HepG2 (cell line): ENCODE measurements at regions of chr19 and their contacts with region 1.

Region 1: GRCh38 chr19:47243776-47244547 is 12.4 kb upstream of the CCDC9 start:
- DNase-seq: peak; percentile 92
- ATAC-seq: peak; percentile 92
- H3K4me3 ChIP-seq: peak overlapping the region in 2 of 3 experiments; percentile 45 to 46; a peak in 4 of 6 replicates
- H3K27ac ChIP-seq: peak overlapping the region; percentile 46
- H3K4me1 ChIP-seq: peaks cover 54% of the 10 kb centered on the region
- H3K27me3 ChIP-seq: no peaks in the 10 kb centered on the region
- CTCF ChIP-seq: peak; percentile 98
- EP300 ChIP-seq: peak; percentile 51 to 84; a peak in 3 of 4 replicates
- POLR2A ChIP-seq: no peak
- RAD21 ChIP-seq: peak; percentile 99

Region 2: GRCh38 chr19:47120470-47121067 is 123.4 kb before region 1 on chr19:
- CTCF ChIA-PET with region 1: no interaction called
- POLR2A ChIA-PET with region 1: no interaction called
- in situ Hi-C with region 1: no loop called
- intact Hi-C with region 1: no loop called
- DNase-seq: no peak
- ATAC-seq: no peak; the same call in 2 of the 3 replicates
- H3K4me3 ChIP-seq: no peak overlapping the region
- H3K27ac ChIP-seq: no peak overlapping the region
- H3K4me1 ChIP-seq: peaks cover 41% of the 10 kb centered on the region
- H3K27me3 ChIP-seq: no peaks in the 10 kb centered on the region
- CTCF ChIP-seq: no peak
- EP300 ChIP-seq: no peak
- POLR2A ChIP-seq: no peak
- RAD21 ChIP-seq: no peak

Region 3: GRCh38 chr19:47130591-47131227 is 113.3 kb before region 1 on chr19 and contains the start of gene SAE1:
- CTCF ChIA-PET with region 1: no interaction called
- POLR2A ChIA-PET with region 1: interaction called, 11 read pairs
- in situ Hi-C with region 1: no loop called
- intact Hi-C with region 1: no loop called
- DNase-seq: peak; percentile 97
- ATAC-seq: peak; percentile 90
- H3K4me3 ChIP-seq: peak within 1 kb of the TSS; percentile 78 to 87 (median 87)
- H3K27ac ChIP-seq: peak within 1 kb of the TSS; percentile 81
- H3K4me1 ChIP-seq: peaks cover 44% of the 10 kb centered on the region
- H3K27me3 ChIP-seq: no peaks in the 10 kb centered on the region; a peak in 1 of 5 replicates
- CTCF ChIP-seq: peak; percentile 90
- EP300 ChIP-seq: no peak
- POLR2A ChIP-seq: peak; percentile 45 to 81; a peak in 3 of 4 replicates
- RAD21 ChIP-seq: no peak; the same call in 1 of the 2 replicates
- total RNA-seq, gene SAE1: 197 and 250 TPM in 2 replicates

Region 4: GRCh38 chr19:47190167-47190727 is 53.7 kb before region 1 on chr19:
- CTCF ChIA-PET with region 1: no interaction called
- POLR2A ChIA-PET with region 1: interaction called, 22 read pairs
- in situ Hi-C with region 1: no loop called
- intact Hi-C with region 1: no loop called
- DNase-seq: peak; percentile 96
- ATAC-seq: peak; percentile 67
- H3K4me3 ChIP-seq: peak overlapping the region; percentile 36 to 45 (median 43); a peak in 5 of 6 replicates
- H3K27ac ChIP-seq: peak overlapping the region; percentile 83
- H3K4me1 ChIP-seq: peaks cover 65% of the 10 kb centered on the region
- H3K27me3 ChIP-seq: no peaks in the 10 kb centered on the region
- CTCF ChIP-seq: no peak
- EP300 ChIP-seq: peak; percentile 92 to 97; a peak in 3 of 4 replicates
- POLR2A ChIP-seq: peak; percentile 44; a peak in 3 of 4 replicates
- RAD21 ChIP-seq: no peak; the same call in 1 of the 2 replicates

Region 5: DNA sequence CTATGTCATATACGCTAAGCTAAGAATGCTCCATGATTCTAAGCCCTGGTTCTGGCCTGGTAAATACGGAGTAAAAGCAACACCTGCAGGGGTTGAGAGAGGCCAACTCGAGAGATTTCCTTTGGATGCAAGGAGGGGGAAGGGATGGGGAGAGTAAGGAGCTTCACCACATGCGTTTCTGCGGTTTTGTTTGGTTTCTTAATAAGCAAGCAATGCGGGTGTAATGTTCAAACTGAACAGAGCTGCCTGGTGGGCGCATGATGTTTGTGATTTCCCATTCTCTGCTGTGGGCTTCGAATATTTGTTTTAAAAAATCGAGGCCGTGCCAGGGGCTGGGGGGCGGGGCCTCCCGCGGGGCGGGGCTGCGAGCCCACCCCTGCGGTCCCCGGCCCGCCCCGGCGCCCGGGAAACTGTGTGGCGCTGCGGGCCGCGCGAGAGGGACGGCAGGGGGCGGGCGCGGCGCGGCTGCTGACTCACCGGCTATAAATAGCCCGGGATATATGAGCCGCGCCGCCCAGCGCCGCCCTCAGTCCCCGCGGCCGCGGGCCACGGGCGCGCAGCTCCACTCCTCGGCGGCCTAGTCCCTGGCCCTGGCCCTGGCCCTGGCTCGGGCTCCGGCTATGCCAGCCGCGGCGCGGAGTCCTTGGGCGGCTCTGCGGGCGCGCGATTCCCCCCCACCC is 18.1 kb before region 1 on chr19:
- CTCF ChIA-PET with region 1: interaction called, 13 read pairs
- POLR2A ChIA-PET with region 1: interaction called, 93 read pairs
- in situ Hi-C with region 1: no loop called
- intact Hi-C with region 1: no loop called
- DNase-seq: peak; percentile 72
- ATAC-seq: peak; percentile 70
- H3K4me3 ChIP-seq: peak overlapping the region; percentile 94 to 100 (median 95); a peak in 5 of 6 replicates
- H3K27ac ChIP-seq: peak overlapping the region; percentile 93
- H3K4me1 ChIP-seq: peaks cover 24% of the 10 kb centered on the region
- H3K27me3 ChIP-seq: peaks cover 0 to 4% of the 10 kb centered on the region in 2 experiments; a peak in 1 of 5 replicates
- CTCF ChIP-seq: peak; percentile 43; the same call in 1 of the 2 replicates
- EP300 ChIP-seq: no peak
- POLR2A ChIP-seq: peak; percentile 99
- RAD21 ChIP-seq: peak; percentile 69

Region 6: GRCh38 chr19:47256688-47257443 is 12.9 kb after region 1 on chr19:
- CTCF ChIA-PET with region 1: no interaction called
- POLR2A ChIA-PET with region 1: interaction called, 81 read pairs
- in situ Hi-C with region 1: no loop called
- intact Hi-C with region 1: no loop called
- DNase-seq: peak; percentile 95
- ATAC-seq: peak; percentile 78
- H3K4me3 ChIP-seq: peak overlapping the region; percentile 72 to 88 (median 88); a peak in 4 of 6 replicates
- H3K27ac ChIP-seq: peak overlapping the region; percentile 86
- H3K4me1 ChIP-seq: peaks cover 43% of the 10 kb centered on the region
- H3K27me3 ChIP-seq: no peaks in the 10 kb centered on the region
- CTCF ChIP-seq: no peak
- EP300 ChIP-seq: no peak
- POLR2A ChIP-seq: no peak
- RAD21 ChIP-seq: no peak